MCF 10A (cell line): ENCODE measurements at regions of chr6 and their contacts with region 1.

Region 1: DNA sequence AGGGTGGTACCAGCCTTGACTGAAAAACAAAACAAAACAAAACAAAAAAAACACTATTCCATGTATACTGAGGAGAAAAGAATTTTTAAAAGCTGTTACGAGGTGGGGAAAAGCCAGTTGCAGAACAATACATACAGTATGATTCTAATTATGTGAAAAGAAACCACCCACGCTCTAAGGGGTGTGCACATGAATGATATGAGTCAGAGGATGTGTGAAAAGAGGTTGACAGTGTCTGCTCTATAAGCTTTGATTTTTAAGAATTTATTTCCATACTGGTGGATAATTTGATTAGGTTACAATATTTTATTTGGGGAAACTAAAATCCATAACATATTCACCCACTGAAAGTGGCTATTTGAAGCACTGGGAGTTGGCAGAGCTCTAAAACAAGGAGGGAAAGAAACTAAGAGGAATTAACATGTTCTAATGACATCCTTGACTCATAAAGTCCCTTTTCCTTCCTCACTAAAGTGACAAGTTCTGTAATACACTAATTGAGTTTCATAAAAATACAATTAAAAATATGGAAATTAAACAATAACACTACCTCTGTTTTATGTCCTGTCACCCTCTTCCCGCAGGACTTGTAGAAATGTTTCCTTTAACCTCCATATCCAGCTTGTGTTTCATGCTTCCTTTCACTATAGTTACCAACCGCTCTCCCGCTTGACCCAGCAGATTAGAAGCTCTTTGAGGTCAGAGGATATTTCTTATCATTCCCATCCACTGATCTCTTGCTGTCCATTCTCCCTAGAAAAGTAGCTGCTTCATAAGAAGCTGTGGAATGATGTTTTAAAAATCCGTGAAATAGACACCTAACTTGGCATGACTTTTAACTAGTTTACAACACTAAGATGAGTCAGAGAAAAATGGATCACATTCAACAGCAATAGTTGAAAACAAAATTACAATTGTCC is 118.6 kb upstream of the CCDC28A start:
- DNase-seq: peak; percentile 79
- H3K4me3 Mint-ChIP-seq: peak overlapping the region; percentile 64
- H3K27ac Mint-ChIP-seq: peak overlapping the region; percentile 83
- H3K4me1 Mint-ChIP-seq: peaks cover 44% of the 10 kb centered on the region
- H3K27me3 Mint-ChIP-seq: no peaks in the 10 kb centered on the region
- CTCF ChIP-seq: no peak

Region 2: DNA sequence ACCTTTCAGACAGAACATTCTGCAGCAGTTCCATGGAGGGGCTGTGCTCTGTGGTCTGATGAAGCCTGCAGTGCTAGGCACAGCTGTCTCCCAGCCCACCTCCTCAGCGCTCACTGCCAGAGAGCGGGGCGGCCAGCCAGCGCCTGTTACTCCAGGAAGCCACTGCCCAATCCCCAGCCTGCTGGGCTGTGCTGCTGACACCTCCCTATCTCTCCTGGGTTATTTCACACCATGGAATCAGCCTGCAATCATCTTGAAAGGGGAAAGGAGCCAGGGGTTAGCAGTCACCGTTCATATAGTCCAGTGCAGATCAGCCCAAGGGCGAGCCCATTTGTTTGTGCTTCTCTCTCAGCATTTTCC is 109.4 kb before region 1 on chr6:
- CTCF ChIA-PET with region 1: no interaction called
- POLR2A ChIA-PET with region 1: no interaction called
- intact Hi-C with region 1: no loop called
- DNase-seq: no peak
- H3K4me3 Mint-ChIP-seq: no peak overlapping the region
- H3K27ac Mint-ChIP-seq: no peak overlapping the region
- H3K4me1 Mint-ChIP-seq: peaks cover 19% of the 10 kb centered on the region
- H3K27me3 Mint-ChIP-seq: no peaks in the 10 kb centered on the region
- CTCF ChIP-seq: no peak

Region 3: GRCh38 chr6:138588805-138589434 is 66.1 kb before region 1 on chr6:
- CTCF ChIA-PET with region 1: interaction called, 5 read pairs
- POLR2A ChIA-PET with region 1: interaction called, 8 read pairs
- intact Hi-C with region 1: loop called (anchors 2 kb)
- DNase-seq: peak; percentile 84
- H3K4me3 Mint-ChIP-seq: no peak overlapping the region
- H3K27ac Mint-ChIP-seq: no peak overlapping the region
- H3K4me1 Mint-ChIP-seq: peaks cover 31% of the 10 kb centered on the region
- H3K27me3 Mint-ChIP-seq: no peaks in the 10 kb centered on the region
- CTCF ChIP-seq: peak; percentile 82

Region 4: DNA sequence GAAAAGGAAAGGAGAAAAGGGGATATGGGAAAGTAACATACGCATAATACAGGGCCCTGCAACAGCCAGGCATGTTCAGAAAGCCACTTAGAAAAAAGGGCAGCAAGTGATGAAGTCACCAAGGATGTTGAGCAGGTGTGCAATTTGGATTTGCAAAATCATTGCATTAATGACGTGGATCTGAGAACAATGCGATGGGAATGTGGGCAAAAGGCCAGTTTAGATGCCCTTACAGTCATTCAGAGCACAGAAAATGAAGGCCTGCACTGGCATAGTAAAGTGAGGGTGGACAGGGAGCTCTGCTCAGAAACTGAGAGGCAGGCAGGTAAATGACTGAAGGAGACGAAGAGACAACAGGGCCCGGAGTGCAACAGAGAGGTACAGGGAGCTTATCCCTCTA is 32.0 kb before region 1 on chr6:
- CTCF ChIA-PET with region 1: no interaction called
- POLR2A ChIA-PET with region 1: interaction called, 12 read pairs
- intact Hi-C with region 1: no loop called
- DNase-seq: peak; percentile 84
- H3K4me3 Mint-ChIP-seq: no peak overlapping the region
- H3K27ac Mint-ChIP-seq: no peak overlapping the region
- H3K4me1 Mint-ChIP-seq: peaks cover 26% of the 10 kb centered on the region
- H3K27me3 Mint-ChIP-seq: no peaks in the 10 kb centered on the region
- CTCF ChIP-seq: no peak

Region 5: DNA sequence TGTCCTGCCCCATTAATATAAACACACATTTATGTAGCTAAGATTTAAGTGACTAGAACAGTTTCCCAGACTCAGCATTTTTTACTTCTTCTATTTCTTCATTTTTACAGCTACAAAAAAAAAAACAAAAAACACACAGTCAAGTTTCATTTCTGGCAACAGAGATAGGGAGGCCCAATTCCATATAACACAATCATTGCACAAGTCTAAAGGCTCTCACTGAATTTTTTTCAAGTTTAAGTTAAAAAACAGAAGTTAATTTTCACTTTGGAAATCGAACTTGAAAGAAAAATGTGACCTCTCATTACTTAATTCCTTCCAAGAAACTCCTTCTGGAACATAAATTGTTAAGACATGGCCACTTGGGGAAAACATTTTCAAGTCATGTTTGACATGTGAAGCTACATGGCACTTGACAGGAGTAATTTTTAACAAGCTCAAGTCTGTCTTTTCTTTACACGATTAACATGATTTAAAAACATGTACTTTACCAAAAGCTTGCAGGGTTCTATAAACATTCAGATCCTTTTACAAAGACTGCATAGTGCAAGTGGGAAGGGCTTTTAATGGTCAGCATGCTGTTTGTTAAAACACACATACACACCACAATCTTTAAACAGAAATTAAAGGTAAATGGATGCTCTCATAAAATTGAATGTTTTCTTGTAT is 18.5 kb after region 1 on chr6:
- CTCF ChIA-PET with region 1: interaction called, 3 read pairs
- POLR2A ChIA-PET with region 1: interaction called, 22 read pairs
- intact Hi-C with region 1: no loop called
- DNase-seq: no peak
- H3K4me3 Mint-ChIP-seq: peak overlapping the region; percentile 8
- H3K27ac Mint-ChIP-seq: peak overlapping the region; percentile 54
- H3K4me1 Mint-ChIP-seq: peaks cover 8% of the 10 kb centered on the region
- H3K27me3 Mint-ChIP-seq: no peaks in the 10 kb centered on the region
- CTCF ChIP-seq: no peak

Region 6: DNA sequence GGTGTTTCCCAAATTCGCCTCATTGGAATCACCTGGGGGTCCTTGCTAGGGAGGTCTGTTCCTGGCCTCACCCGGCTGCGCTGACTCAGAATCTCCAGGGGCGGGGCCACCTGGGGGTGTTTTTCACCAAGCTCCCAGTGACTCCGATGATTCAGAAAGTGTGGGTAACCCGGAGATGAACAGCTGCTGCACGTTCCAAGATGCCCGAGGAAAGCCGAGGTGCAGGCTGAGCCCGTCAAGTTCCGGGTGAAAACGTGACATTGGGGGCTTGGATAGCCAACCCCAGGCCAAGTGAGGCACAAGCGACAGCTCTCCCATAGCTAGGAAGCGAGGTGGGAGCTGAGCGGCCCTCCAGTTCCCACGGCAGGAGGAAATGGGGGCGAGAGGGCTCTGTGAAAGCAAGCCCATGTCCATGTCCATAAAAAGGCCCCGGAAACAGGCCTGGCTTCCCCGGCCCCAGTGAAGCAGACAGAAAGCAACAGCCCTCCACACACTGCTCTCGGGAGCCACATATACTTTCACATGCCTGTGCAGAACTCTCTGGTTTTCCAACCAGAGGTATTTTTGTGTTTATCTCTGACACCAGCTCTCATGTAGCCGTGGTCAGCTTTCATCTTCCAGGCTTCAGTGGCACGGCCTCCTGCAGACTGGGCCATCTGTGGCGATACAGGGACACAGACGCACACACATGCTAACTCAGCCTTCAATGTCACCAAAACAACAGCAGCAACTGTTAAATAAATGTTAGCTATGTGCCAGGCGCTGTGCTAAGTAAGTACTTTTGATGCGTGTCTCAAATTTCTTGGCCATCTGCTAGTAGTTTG is 27.9 kb after region 1 on chr6:
- CTCF ChIA-PET with region 1: interaction called, 10 read pairs
- POLR2A ChIA-PET with region 1: interaction called, 103 read pairs
- intact Hi-C with region 1: no loop called
- DNase-seq: peak; percentile 86
- H3K4me3 Mint-ChIP-seq: peak overlapping the region; percentile 72
- H3K27ac Mint-ChIP-seq: peak overlapping the region; percentile 98
- H3K4me1 Mint-ChIP-seq: peaks cover 5% of the 10 kb centered on the region
- H3K27me3 Mint-ChIP-seq: no peaks in the 10 kb centered on the region
- CTCF ChIP-seq: no peak